ENCODE measurements at regions of chr11 and their contacts with region 1.

Region 1: GRCh38 chr11:96817488-96817887 is 427.7 kb downstream of the JRKL start:
- DNase-seq: no peak
- ATAC-seq: no peak
- H3K4me3 ChIP-seq: no peak overlapping the region
- H3K27ac ChIP-seq: no peak overlapping the region
- H3K4me1 ChIP-seq: no peaks in the 10 kb centered on the region
- H3K27me3 ChIP-seq: no peaks in the 10 kb centered on the region
- CTCF ChIP-seq: no peak

Region 2: DNA sequence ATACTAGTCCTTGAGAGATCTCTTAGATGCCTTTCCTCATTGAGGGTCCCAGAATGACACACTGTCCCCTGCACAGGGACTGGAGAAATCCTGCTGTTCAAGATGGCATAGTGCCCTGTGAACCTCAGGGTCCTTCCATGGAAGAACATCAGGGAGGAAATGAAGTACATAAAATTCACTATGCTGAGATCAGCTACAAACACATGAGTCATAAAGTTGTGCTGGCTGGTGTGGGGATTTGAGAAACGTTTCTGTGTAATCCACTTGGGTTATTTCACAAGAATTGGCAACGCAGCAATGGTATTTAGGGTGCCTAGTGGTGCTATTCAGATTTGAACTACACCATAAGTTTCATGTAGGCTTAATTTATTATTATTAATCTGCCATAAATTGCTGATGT is 648.9 kb before region 1 on chr11:
- intact Hi-C with region 1: loop called in 1 of 3 experiments (anchors 5 kb)
- DNase-seq: peak in 2 of 6 donors; percentile 14 to 20
- ATAC-seq: peak in 3 of 4 donors; percentile 71 to 91 (median 78)
- H3K4me3 ChIP-seq: no peak overlapping the region
- H3K27ac ChIP-seq: peak overlapping the region in 3 of 4 donors; percentile 13 to 82 (median 66)
- H3K4me1 ChIP-seq: peaks cover 0 to 5% (median 0%) of the 10 kb centered on the region in 3 donors
- H3K27me3 ChIP-seq: no peaks in the 10 kb centered on the region
- CTCF ChIP-seq: no peak

Region 3: GRCh38 chr11:97092823-97093222 is 275.3 kb after region 1 on chr11:
- intact Hi-C with region 1: no loop called
- DNase-seq: no peak
- ATAC-seq: no peak
- H3K4me3 ChIP-seq: no peak overlapping the region
- H3K27ac ChIP-seq: no peak overlapping the region
- H3K4me1 ChIP-seq: no peaks in the 10 kb centered on the region
- H3K27me3 ChIP-seq: no peaks in the 10 kb centered on the region
- CTCF ChIP-seq: no peak